ENCODE measurements at regions of chr19 and their contacts with region 1.

Region 1: DNA sequence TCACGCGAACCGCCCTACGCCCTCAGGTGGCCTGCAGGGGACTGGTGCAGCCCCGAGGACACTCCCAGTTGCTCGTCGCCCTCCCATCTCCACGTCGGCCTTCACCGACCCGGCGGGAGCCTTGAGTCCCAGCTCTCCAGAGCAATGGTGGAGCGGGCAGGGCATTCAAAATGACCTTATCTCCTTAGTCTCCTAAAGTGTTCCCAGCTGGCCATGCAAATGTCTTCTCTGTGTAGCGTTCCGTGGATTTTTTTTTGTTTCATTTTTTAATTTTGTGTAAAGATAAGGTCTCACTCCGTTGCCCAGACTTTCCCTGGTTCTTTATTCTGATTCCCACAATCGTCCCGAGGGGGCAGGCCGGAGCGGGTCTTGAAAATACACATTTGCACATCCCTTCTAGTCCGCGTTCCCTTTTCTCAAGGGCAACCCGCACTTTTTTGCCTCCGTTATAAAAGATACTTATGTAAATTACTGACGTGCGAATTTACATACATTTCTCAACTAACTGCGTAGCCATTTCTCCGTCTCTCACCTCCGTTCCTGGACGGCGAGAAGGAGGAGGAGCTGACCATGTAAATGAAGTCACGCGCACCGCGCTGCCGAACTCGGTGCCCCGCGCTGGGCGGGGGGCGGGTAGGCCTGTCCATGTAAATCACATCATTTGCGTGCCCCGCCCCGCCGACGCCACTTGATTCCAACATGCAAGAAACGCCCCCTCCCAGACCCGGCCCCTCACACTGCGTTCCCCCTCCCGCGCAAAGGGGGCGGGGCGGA is 581 bp upstream of the EGLN2 start:
- DNase-seq: peak; percentile 57
- ATAC-seq: peak; percentile 38
- H3K4me3 Mint-ChIP-seq: peak overlapping the region; percentile 95
- H3K27ac Mint-ChIP-seq: peak overlapping the region; percentile 99
- H3K4me1 Mint-ChIP-seq: peaks cover 62% of the 10 kb centered on the region
- H3K27me3 Mint-ChIP-seq: no peaks in the 10 kb centered on the region
- CTCF ChIP-seq: no peak

Region 2: DNA sequence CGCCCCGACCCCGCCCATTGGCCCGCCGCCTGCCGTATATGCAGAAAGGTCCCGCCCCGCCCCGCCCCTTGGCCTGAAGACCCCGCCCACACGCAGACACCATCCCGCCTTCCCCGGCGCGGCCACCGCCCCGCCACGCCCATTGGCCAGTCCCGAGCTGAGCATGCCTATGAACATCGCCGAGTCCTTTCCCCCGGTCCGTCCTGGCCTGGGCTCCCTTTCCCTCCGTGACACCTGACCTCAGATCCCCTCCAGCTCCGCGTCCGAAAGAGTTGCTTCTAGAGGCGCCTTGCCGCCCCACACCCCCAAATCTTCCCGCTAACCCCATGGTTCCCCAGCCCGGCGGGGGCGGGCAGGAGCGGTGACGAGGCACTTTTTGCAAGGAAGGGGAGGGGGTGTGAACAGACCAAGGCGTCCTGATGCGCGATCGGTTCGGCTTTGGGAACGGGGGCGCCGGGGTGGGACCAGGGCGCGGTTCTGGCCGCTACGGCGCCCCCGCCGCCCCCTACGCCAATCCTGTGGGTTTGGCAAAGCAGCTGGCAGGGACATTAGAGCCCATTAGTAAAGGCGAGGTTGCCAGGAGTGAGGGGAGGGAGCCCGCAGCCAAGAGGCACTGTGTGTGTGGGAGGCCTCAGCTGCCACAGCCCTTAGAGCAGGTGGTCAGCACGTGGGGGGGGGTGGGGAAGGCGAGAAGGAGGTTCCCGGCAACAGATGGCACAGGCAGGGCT is 107.6 kb before region 1 on chr19:
- CTCF ChIA-PET with region 1: no interaction called
- POLR2A ChIA-PET with region 1: interaction called, 15 read pairs
- intact Hi-C with region 1: loop called (anchors 1 kb)
- DNase-seq: peak; percentile 76
- ATAC-seq: peak; percentile 78
- H3K4me3 Mint-ChIP-seq: peak overlapping the region; percentile 95
- H3K27ac Mint-ChIP-seq: peak overlapping the region; percentile 89
- H3K4me1 Mint-ChIP-seq: peaks cover 16% of the 10 kb centered on the region
- H3K27me3 Mint-ChIP-seq: no peaks in the 10 kb centered on the region
- CTCF ChIP-seq: no peak

Region 3: DNA sequence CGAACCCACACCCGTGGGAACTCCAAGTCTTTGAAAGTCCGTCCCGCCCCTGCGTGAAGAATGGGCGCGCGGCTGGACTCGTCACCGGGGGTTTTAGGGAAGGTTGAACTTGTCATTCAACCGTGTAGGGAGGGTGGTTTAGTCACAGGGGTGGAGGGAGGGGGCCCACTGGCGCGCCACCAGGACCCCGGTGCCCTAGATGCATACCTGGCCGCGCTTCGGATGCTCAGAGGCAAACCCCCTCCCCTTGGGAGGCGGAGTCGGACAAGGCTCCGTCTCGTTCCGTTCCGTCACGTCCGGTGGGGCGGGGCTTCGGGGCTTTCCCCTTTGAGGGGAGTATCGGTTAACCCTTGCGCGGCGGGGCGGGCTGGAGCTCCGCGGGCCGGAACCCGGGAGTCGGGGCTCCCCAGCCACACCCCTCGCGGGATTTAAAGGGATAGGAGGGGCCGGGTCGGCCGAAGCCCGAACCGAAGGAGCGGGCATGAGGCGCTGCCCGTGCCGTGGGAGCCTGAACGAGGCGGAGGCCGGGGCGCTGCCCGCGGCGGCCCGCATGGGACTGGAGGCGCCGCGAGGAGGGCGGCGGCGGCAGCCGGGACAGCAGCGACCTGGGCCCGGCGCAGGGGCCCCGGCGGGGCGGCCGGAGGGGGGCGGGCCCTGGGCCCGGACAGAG is 81.6 kb before region 1 on chr19 and contains the starts of genes COQ8B and ITPKC:
- CTCF ChIA-PET with region 1: no interaction called
- POLR2A ChIA-PET with region 1: interaction called, 21 read pairs
- intact Hi-C with region 1: loop called (anchors 1 kb)
- DNase-seq: peak; percentile 100
- ATAC-seq: peak; percentile 70
- H3K4me3 Mint-ChIP-seq: peak within 1 kb of the TSS; percentile 90
- H3K27ac Mint-ChIP-seq: peak within 1 kb of the TSS; percentile 95
- H3K4me1 Mint-ChIP-seq: peaks cover 63% of the 10 kb centered on the region
- H3K27me3 Mint-ChIP-seq: no peaks in the 10 kb centered on the region
- CTCF ChIP-seq: no peak
- total RNA-seq, gene COQ8B: 34.4 and 38.5 TPM in 2 replicates
- total RNA-seq, gene ITPKC: 13.0 and 13.3 TPM in 2 replicates

Region 4: DNA sequence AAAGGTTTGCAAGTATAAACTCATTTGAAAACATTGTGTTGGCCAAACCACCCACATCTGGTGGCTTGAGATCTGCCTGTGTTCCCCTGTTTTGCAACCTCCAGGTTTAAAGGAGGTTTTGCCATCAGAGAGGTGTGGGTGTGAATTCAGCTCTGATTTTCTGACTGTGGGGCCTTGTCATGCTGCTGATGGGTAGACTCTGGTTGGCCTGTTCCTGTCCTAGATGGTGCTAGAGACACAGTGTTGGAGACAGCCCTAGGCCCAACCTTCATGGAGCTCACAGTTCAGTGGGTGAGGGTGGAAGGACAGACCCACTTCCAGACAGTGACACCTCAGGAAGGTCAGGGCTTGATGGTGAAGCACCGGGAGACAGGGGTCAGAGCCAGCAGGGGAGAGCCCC is 12.9 kb before region 1 on chr19:
- CTCF ChIA-PET with region 1: no interaction called
- POLR2A ChIA-PET with region 1: interaction called, 287 read pairs
- intact Hi-C with region 1: no loop called
- DNase-seq: no peak
- ATAC-seq: no peak
- H3K4me3 Mint-ChIP-seq: no peak overlapping the region
- H3K27ac Mint-ChIP-seq: no peak overlapping the region
- H3K4me1 Mint-ChIP-seq: peaks cover 14% of the 10 kb centered on the region
- H3K27me3 Mint-ChIP-seq: no peaks in the 10 kb centered on the region
- CTCF ChIP-seq: no peak